CD14-positive monocyte (primary cell): ENCODE measurements at regions of chr1 and their contacts with region 1.

Region 1: GRCh38 chr1:41573785-41574713 is 89.6 kb upstream of the EDN2 start:
- DNase-seq: peak; percentile 65 to 73 (median 73)
- H3K4me3 ChIP-seq: no peak overlapping the region
- H3K4me3 Mint-ChIP-seq: no peak overlapping the region
- H3K27ac ChIP-seq: no peak overlapping the region
- H3K27ac Mint-ChIP-seq: peak overlapping the region in 2 of 7 donors; percentile 18 to 29
- H3K4me1 ChIP-seq: peaks cover 4 to 10% of the 10 kb centered on the region in 2 donors
- H3K4me1 Mint-ChIP-seq: peaks cover 12% of the 10 kb centered on the region
- H3K27me3 ChIP-seq: no peaks in the 10 kb centered on the region
- H3K27me3 Mint-ChIP-seq: peaks cover 0 to 5% (median 3%) of the 10 kb centered on the region in 3 donors
- CTCF ChIP-seq: peak; percentile 87

Region 2: GRCh38 chr1:41812051-41812450 is 238.0 kb after region 1 on chr1:
- intact Hi-C with region 1: loop called (anchors 10 kb)
- DNase-seq: peak; percentile 54 to 69 (median 66)
- H3K4me3 ChIP-seq: no peak overlapping the region
- H3K4me3 Mint-ChIP-seq: peak overlapping the region in 1 of 2 donors; percentile 26
- H3K27ac ChIP-seq: peak overlapping the region in 1 of 2 donors; percentile 64
- H3K27ac Mint-ChIP-seq: peak overlapping the region in 5 of 7 donors; percentile 19 to 96 (median 87)
- H3K4me1 ChIP-seq: peaks cover 29 to 34% of the 10 kb centered on the region in 2 donors
- H3K4me1 Mint-ChIP-seq: peaks cover 35% of the 10 kb centered on the region
- H3K27me3 ChIP-seq: no peaks in the 10 kb centered on the region
- H3K27me3 Mint-ChIP-seq: peaks cover 0 to 3% (median 2%) of the 10 kb centered on the region in 3 donors
- CTCF ChIP-seq: peak; percentile 92

Region 3: GRCh38 chr1:42173155-42173933 is 599.3 kb after region 1 on chr1:
- intact Hi-C with region 1: loop called (anchors 2 to 10 kb)
- DNase-seq: peak; percentile 23 to 45 (median 43)
- H3K4me3 ChIP-seq: no peak overlapping the region
- H3K4me3 Mint-ChIP-seq: no peak overlapping the region
- H3K27ac ChIP-seq: no peak overlapping the region
- H3K27ac Mint-ChIP-seq: no peak overlapping the region
- H3K4me1 ChIP-seq: peaks cover 2 to 6% of the 10 kb centered on the region in 2 donors
- H3K4me1 Mint-ChIP-seq: peaks cover 5% of the 10 kb centered on the region
- H3K27me3 ChIP-seq: no peaks in the 10 kb centered on the region
- H3K27me3 Mint-ChIP-seq: peaks cover 0 to 2% (median 1%) of the 10 kb centered on the region in 3 donors
- CTCF ChIP-seq: peak; percentile 98